ENCODE measurements at regions of chr9 and their contacts with region 1.

Region 1: GRCh38 chr9:128339771-128340690 is at the start of gene SLC27A4:
- DNase-seq: peak; percentile 80 to 83
- ATAC-seq: peak; percentile 89 to 93 (median 92)
- H3K4me3 ChIP-seq: peak within 1 kb of the TSS; percentile 95
- H3K27ac ChIP-seq: peak within 1 kb of the TSS; percentile 73
- H3K4me1 ChIP-seq: peaks cover 7% of the 10 kb centered on the region
- H3K27me3 ChIP-seq: no peaks in the 10 kb centered on the region
- CTCF ChIP-seq: no peak
- total RNA-seq, gene SLC27A4: 10.4 to 26.2 (median 17.9) TPM

Region 2: GRCh38 chr9:128296337-128297220 is 43.5 kb before region 1 on chr9:
- intact Hi-C with region 1: loop called (anchors 2 to 5 kb)
- DNase-seq: no peak
- ATAC-seq: no peak
- H3K4me3 ChIP-seq: no peak overlapping the region
- H3K27ac ChIP-seq: no peak overlapping the region
- H3K4me1 ChIP-seq: no peaks in the 10 kb centered on the region
- H3K27me3 ChIP-seq: no peaks in the 10 kb centered on the region
- CTCF ChIP-seq: no peak

Region 3: GRCh38 chr9:128370826-128371621 is 31.0 kb after region 1 on chr9 and contains the start of gene URM1:
- intact Hi-C with region 1: no loop called
- DNase-seq: peak; percentile 97 to 98
- ATAC-seq: peak; percentile 96 to 98 (median 98)
- H3K4me3 ChIP-seq: peak within 1 kb of the TSS; percentile 87
- H3K27ac ChIP-seq: peak within 1 kb of the TSS; percentile 94
- H3K4me1 ChIP-seq: peaks cover 15% of the 10 kb centered on the region
- H3K27me3 ChIP-seq: peaks cover 0 to under 1% (median 0%) of the 10 kb centered on the region in 3 donors
- CTCF ChIP-seq: no peak
- total RNA-seq, gene URM1: 34.5 to 58.7 (median 52.3) TPM